Right lobe of liver (tissue), 6 donors: ENCODE measurements at regions of chr14 and their contacts with region 1.

Region 1: DNA sequence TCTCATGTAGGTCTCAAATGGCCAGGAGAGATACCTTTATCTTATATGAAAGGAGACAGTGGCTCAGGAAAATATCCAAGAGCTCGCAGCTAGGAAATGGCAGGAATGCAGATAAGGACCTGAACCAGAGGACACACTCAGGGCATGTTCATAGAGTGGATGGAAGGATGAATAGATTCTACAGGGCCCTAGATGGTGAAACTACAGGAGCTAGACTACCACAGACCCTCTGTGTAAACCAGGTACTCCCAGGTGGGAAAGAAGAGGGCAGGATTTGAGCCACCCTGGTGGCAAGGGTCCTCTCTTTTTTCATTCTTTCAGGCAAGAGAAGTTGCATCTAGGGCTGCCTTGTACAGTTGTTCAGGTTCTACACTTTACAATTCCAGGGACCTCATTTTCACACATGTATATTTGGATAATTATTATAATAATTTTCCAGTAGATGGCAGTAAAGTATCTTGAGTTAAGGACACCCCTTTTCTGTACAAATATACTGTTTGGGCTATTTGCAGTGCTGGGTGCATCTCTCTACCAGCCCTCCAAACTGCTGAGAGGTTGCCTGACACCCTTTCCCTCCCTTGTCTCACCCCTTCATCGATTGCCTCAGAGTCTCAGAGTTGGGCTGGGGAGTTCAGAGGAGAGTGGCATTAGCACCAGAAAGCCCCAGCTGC is 10.5 kb upstream of the ZDHHC22 start:
- DNase-seq: no peak
- ATAC-seq: peak; percentile 46 to 56 (median 54)
- H3K4me3 ChIP-seq: no peak overlapping the region
- H3K27ac ChIP-seq: no peak overlapping the region
- H3K4me1 ChIP-seq: no peaks in the 10 kb centered on the region
- H3K27me3 ChIP-seq: no peaks in the 10 kb centered on the region
- CTCF ChIP-seq: peak; percentile 6 to 27 (median 20)
- POLR2A ChIP-seq: no peak

Region 2: DNA sequence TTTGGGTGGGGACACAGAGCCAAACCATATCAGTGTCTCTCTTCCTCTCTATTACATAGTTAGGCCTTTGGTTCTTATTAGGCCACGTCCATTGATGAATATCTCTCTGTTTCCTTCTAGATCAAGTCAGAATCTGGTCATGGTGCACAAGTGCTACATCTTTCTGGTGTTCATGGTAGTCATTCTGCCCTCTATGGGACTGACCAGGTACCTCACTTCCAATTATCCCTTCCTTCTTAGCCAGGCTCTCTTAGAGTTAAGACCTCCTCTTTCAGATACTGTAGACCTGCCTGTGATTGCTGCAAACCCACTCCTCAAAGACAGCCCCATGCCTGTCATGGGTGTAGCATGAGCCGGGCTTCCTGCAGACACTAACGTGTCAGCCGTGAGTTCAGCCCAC is 93.8 kb after region 1 on chr14:
- intact Hi-C with region 1: no loop called
- DNase-seq: no peak
- ATAC-seq: no peak
- H3K4me3 ChIP-seq: no peak overlapping the region
- H3K27ac ChIP-seq: no peak overlapping the region
- H3K4me1 ChIP-seq: no peaks in the 10 kb centered on the region
- H3K27me3 ChIP-seq: no peaks in the 10 kb centered on the region
- CTCF ChIP-seq: no peak
- POLR2A ChIP-seq: no peak

Region 3: DNA sequence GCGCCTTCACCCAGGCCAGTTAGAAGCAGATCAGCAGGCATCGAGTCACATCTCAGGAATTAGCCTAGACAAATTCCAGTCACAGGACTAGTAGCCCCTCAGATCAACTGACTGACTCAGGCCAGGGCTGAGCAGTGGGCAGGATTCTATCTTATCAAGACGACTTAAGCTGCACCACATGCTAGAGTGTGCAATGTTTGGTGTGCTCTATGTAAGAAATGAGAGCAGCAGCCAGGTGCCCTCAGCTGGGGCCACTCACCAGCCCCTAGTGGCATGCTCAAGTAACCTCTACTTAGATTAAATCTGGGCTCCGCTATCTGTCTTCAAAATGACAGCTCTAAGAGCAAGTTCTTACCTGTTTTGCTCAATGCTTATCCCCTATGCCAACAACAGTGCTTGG is 138.7 kb after region 1 on chr14:
- intact Hi-C with region 1: loop called in 1 of 2 experiments (anchors 10 kb)
- DNase-seq: no peak
- ATAC-seq: no peak
- H3K4me3 ChIP-seq: no peak overlapping the region
- H3K27ac ChIP-seq: no peak overlapping the region
- H3K4me1 ChIP-seq: no peaks in the 10 kb centered on the region
- H3K27me3 ChIP-seq: no peaks in the 10 kb centered on the region
- CTCF ChIP-seq: no peak
- POLR2A ChIP-seq: no peak

Region 4: DNA sequence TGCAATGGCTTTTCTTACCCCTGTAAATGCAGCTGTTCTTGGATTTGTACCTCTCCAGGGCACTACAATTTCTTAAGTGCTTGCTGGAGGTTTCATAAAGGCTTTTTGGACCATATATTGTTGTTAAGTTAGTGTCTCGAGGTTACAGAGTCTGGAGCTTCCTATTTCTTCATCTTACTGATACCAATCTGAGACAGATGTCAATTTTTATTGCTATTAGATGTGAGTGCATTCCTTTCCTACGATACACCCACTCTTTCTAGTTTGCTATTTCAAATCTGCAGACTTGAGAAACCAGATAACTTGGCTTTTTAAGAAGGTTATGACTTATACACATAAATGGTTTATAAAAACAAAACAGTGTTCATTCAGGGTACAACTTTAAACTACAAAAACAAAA is 269.1 kb after region 1 on chr14:
- intact Hi-C with region 1: no loop called
- DNase-seq: no peak
- ATAC-seq: no peak
- H3K4me3 ChIP-seq: no peak overlapping the region
- H3K27ac ChIP-seq: no peak overlapping the region
- H3K4me1 ChIP-seq: no peaks in the 10 kb centered on the region
- H3K27me3 ChIP-seq: no peaks in the 10 kb centered on the region
- CTCF ChIP-seq: no peak
- POLR2A ChIP-seq: no peak